ENCODE measurements at regions of chr3 and their contacts with region 1.

Region 1: GRCh38 chr3:94062431-94063404 is at the starts of genes DHFR2 and NSUN3:
- DNase-seq: peak; percentile 95
- ATAC-seq: peak; percentile 88
- H3K4me3 ChIP-seq: peak within 1 kb of the TSS; percentile 68 to 95 (median 93)
- H3K4me3 Mint-ChIP-seq: peak within 1 kb of the TSS; percentile 100
- H3K27ac ChIP-seq: peak within 1 kb of the TSS; percentile 94 to 99
- H3K27ac Mint-ChIP-seq: peak within 1 kb of the TSS; percentile 100
- H3K4me1 ChIP-seq: peaks cover 18 to 29% of the 10 kb centered on the region in 2 donors
- H3K4me1 Mint-ChIP-seq: peaks cover 48% of the 10 kb centered on the region
- H3K27me3 ChIP-seq: no peaks in the 10 kb centered on the region
- H3K27me3 Mint-ChIP-seq: no peaks in the 10 kb centered on the region
- CTCF ChIP-seq: no peak
- total RNA-seq, gene DHFR2: 8.1 and 8.8 TPM in 2 replicates
- total RNA-seq, gene NSUN3: 23.5 and 25.7 TPM in 2 replicates

Region 2: GRCh38 chr3:93904568-93904967 is 158.2 kb before region 1 on chr3:
- CTCF ChIA-PET with region 1: no interaction called
- POLR2A ChIA-PET with region 1: no interaction called
- intact Hi-C with region 1: no loop called
- DNase-seq: no peak
- ATAC-seq: no peak
- H3K4me3 ChIP-seq: no peak overlapping the region
- H3K4me3 Mint-ChIP-seq: no peak overlapping the region
- H3K27ac ChIP-seq: no peak overlapping the region
- H3K27ac Mint-ChIP-seq: no peak overlapping the region
- H3K4me1 ChIP-seq: no peaks in the 10 kb centered on the region
- H3K4me1 Mint-ChIP-seq: no peaks in the 10 kb centered on the region
- H3K27me3 ChIP-seq: no peaks in the 10 kb centered on the region
- H3K27me3 Mint-ChIP-seq: no peaks in the 10 kb centered on the region
- CTCF ChIP-seq: no peak

Region 3: GRCh38 chr3:93979833-93980676 is 82.7 kb before region 1 on chr3 and contains the start of gene ARL13B:
- CTCF ChIA-PET with region 1: interaction called, 5 read pairs
- POLR2A ChIA-PET with region 1: interaction called, 7 read pairs
- intact Hi-C with region 1: loop called (anchors 1 kb)
- DNase-seq: peak; percentile 97
- ATAC-seq: peak; percentile 100
- H3K4me3 ChIP-seq: peak within 1 kb of the TSS; percentile 59 to 95 (median 90)
- H3K4me3 Mint-ChIP-seq: peak within 1 kb of the TSS; percentile 91
- H3K27ac ChIP-seq: peak within 1 kb of the TSS; percentile 87 to 96
- H3K27ac Mint-ChIP-seq: peak within 1 kb of the TSS; percentile 85
- H3K4me1 ChIP-seq: peaks cover 9 to 10% of the 10 kb centered on the region in 2 donors
- H3K4me1 Mint-ChIP-seq: peaks cover 16% of the 10 kb centered on the region
- H3K27me3 ChIP-seq: no peaks in the 10 kb centered on the region
- H3K27me3 Mint-ChIP-seq: peaks cover 4% of the 10 kb centered on the region
- CTCF ChIP-seq: no peak
- total RNA-seq, gene ARL13B: 12.2 and 12.9 TPM in 2 replicates